Psoas muscle (tissue), 8 donors: ENCODE measurements at regions of chr10 and their contacts with region 1.

Region 1: DNA sequence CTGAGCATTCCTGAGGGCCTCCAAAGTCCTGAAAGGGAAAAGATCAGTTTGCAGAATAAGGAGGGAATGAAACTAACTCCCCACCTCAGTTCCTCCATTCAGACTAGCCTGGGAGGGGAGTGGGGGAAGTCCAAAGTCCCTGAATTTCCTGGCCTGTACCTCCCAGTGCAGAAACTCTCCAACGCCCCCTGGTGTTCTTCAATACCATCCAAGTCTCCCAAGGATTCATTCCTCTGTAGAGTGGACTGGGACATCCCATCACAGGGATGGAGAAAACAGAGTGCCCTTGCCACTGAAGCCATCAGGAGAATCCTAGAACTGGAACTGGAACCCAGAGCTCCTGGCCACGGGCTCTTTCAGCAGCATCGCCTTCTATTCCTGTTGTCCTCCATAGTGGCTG is 1.6 kb upstream of the COL13A1 start:
- DNase-seq: no peak
- ATAC-seq: peak in 3 of 4 donors; percentile 24 to 43 (median 27)
- H3K4me3 ChIP-seq: no peak overlapping the region
- H3K27ac ChIP-seq: no peak overlapping the region
- H3K4me1 ChIP-seq: peaks cover 16% of the 10 kb centered on the region
- H3K27me3 ChIP-seq: no peaks in the 10 kb centered on the region
- CTCF ChIP-seq: peak; percentile 62

Region 2: GRCh38 chr10:69644658-69645295 is 155.3 kb before region 1 on chr10:
- intact Hi-C with region 1: loop called (anchors 2 to 5 kb)
- DNase-seq: peak; percentile 42 to 71
- ATAC-seq: peak; percentile 65 to 86 (median 71)
- H3K4me3 ChIP-seq: no peak overlapping the region
- H3K27ac ChIP-seq: no peak overlapping the region
- H3K4me1 ChIP-seq: no peaks in the 10 kb centered on the region
- H3K27me3 ChIP-seq: peaks cover 0 to 1% (median 0%) of the 10 kb centered on the region in 3 donors
- CTCF ChIP-seq: peak; percentile 91

Region 3: DNA sequence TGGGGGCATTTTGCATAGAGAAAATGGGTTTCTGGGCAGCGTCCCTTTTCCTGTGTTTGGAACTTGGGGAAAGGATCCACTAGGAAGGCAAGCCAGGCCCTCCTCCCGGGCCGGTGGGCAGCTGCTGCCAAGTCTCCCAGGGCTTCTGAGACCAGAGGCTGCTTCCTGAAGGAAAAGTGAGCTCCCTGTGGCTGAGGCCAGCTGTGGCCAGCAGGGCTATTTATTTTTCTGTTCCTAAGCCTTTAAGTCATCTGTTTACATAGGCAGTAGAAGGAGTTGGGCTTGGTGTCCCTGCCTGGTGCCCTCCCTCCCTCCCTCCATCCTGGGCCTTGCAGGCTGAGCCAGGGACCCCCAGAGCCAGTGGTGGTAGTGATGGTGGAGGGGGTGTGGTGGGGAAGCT is 68.9 kb before region 1 on chr10:
- intact Hi-C with region 1: loop called (anchors 2 to 5 kb)
- DNase-seq: no peak
- ATAC-seq: no peak
- H3K4me3 ChIP-seq: no peak overlapping the region
- H3K27ac ChIP-seq: peak overlapping the region; percentile 76
- H3K4me1 ChIP-seq: peaks cover 78% of the 10 kb centered on the region
- H3K27me3 ChIP-seq: no peaks in the 10 kb centered on the region
- CTCF ChIP-seq: no peak

Region 4: GRCh38 chr10:69835875-69836730 is 36.0 kb after region 1 on chr10:
- intact Hi-C with region 1: loop called in 1 of 2 experiments (anchors 2 kb)
- DNase-seq: no peak
- ATAC-seq: no peak
- H3K4me3 ChIP-seq: no peak overlapping the region
- H3K27ac ChIP-seq: peak overlapping the region; percentile 41
- H3K4me1 ChIP-seq: peaks cover 17% of the 10 kb centered on the region
- H3K27me3 ChIP-seq: no peaks in the 10 kb centered on the region
- CTCF ChIP-seq: no peak

Region 5: GRCh38 chr10:69845574-69846292 is 45.6 kb after region 1 on chr10:
- intact Hi-C with region 1: loop called (anchors 2 to 5 kb)
- DNase-seq: peak; percentile 70 to 90
- ATAC-seq: peak; percentile 81 to 88 (median 84)
- H3K4me3 ChIP-seq: peak overlapping the region; percentile 21
- H3K27ac ChIP-seq: peak overlapping the region; percentile 95
- H3K4me1 ChIP-seq: peaks cover 42% of the 10 kb centered on the region
- H3K27me3 ChIP-seq: no peaks in the 10 kb centered on the region
- CTCF ChIP-seq: no peak